HEK293 (cell line): ENCODE measurements at regions of chr1 and their contacts with region 1.

Region 1: GRCh38 chr1:42173155-42173933 is 8.8 kb upstream of the GUCA2A start:
- H3K4me3 ChIP-seq: no peak overlapping the region
- H3K27ac ChIP-seq: no peak overlapping the region
- H3K4me1 ChIP-seq: peaks cover 11% of the 10 kb centered on the region
- CTCF ChIP-seq: peak; percentile 81

Region 2: DNA sequence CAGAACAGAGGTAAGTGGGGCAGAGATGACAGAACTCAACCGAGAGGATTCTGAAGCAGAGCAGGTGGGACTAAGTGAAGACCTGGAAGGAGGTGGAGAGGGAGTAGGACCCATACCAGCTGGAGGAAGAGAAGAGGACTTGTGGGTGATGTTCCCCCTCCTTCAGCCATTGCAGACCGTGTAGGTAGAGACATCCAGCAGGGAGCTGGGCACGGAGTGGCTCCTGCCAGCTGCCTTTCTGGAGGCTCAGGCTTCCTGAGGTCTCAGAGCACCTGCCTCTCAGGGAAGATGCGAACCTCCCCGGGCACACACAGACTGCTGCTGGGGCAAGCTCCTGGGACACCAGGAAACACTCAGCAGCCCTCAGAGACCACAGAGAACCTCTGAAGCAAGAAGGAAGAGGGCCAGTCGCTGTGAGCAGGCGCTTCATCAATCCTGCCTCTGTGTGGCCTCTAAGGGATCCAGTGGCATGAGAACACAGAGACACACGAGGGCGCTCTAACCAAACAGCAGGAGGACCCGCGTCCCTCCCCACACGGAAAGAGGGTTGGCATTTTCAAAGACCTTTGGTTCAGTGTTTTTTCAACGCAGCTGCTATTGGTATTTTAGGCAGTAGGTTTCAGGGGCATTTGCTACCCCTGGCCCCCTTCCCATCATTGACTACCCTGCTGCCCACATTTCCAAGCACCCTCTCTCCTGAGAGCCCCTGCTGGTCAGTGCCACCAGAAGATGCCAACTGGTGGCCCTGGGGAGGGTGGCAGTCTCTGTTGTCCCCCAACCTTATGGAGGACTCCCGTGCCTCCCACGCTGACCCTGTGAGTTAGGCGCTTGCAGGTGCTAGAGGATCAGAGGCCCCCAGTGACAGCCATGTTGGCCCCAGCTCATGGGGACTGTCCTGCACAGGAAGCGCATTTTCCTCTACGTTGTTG is 599.3 kb before region 1 on chr1:
- CTCF ChIA-PET with region 1: interaction called, 24 read pairs
- POLR2A ChIA-PET with region 1: no interaction called
- H3K4me3 ChIP-seq: no peak overlapping the region
- H3K27ac ChIP-seq: no peak overlapping the region
- H3K4me1 ChIP-seq: no peaks in the 10 kb centered on the region
- CTCF ChIP-seq: peak; percentile 92

Region 3: GRCh38 chr1:41963636-41964035 is 209.7 kb before region 1 on chr1:
- CTCF ChIA-PET with region 1: no interaction called
- POLR2A ChIA-PET with region 1: no interaction called
- H3K4me3 ChIP-seq: no peak overlapping the region
- H3K27ac ChIP-seq: no peak overlapping the region
- H3K4me1 ChIP-seq: no peaks in the 10 kb centered on the region
- CTCF ChIP-seq: no peak

Region 4: DNA sequence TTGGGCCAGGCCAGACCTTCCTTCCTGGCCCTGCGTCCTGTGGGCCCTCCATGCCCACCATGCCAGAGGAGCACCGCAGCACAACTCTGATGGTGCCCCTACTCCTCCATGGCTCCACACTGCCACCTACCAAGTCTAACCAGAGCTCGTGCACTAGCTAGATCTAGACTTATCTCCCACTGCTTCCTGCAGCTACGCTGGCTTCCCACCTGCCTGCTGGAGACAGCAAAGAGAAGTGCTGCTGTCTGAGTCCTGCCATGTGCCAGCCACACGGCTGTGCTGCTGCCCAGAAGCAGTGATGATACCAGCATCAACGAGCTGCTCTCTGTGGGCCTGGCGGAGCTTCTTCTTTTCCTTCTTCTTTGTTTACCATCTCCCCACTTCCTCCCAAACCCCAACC is 15.7 kb before region 1 on chr1:
- CTCF ChIA-PET with region 1: interaction called, 32 read pairs
- POLR2A ChIA-PET with region 1: no interaction called
- H3K4me3 ChIP-seq: no peak overlapping the region
- H3K27ac ChIP-seq: no peak overlapping the region
- H3K4me1 ChIP-seq: no peaks in the 10 kb centered on the region
- CTCF ChIP-seq: peak; percentile 57

Region 5: GRCh38 chr1:42201986-42202385 is 28.6 kb after region 1 on chr1:
- CTCF ChIA-PET with region 1: interaction called, 10 read pairs
- POLR2A ChIA-PET with region 1: no interaction called
- H3K4me3 ChIP-seq: no peak overlapping the region
- H3K27ac ChIP-seq: no peak overlapping the region
- H3K4me1 ChIP-seq: no peaks in the 10 kb centered on the region
- CTCF ChIP-seq: no peak

Region 6: GRCh38 chr1:42335050-42335808 is 161.9 kb after region 1 on chr1 and contains the start of gene FOXJ3:
- CTCF ChIA-PET with region 1: interaction called, 10 read pairs
- POLR2A ChIA-PET with region 1: no interaction called
- H3K4me3 ChIP-seq: peak within 1 kb of the TSS; percentile 87
- H3K27ac ChIP-seq: peak within 1 kb of the TSS; percentile 85
- H3K4me1 ChIP-seq: peaks cover 8% of the 10 kb centered on the region
- CTCF ChIP-seq: peak; percentile 85